Astrocyte of the cerebellum (primary cell): ENCODE measurements at regions of chr15 and their contacts with region 1.

Region 1: GRCh38 chr15:49235446-49236124 is 65.5 kb downstream of the GALK2 start:
- DNase-seq: peak; percentile 86
- H3K4me3 ChIP-seq: no peak overlapping the region
- CTCF ChIP-seq: peak; percentile 72

Region 2: DNA sequence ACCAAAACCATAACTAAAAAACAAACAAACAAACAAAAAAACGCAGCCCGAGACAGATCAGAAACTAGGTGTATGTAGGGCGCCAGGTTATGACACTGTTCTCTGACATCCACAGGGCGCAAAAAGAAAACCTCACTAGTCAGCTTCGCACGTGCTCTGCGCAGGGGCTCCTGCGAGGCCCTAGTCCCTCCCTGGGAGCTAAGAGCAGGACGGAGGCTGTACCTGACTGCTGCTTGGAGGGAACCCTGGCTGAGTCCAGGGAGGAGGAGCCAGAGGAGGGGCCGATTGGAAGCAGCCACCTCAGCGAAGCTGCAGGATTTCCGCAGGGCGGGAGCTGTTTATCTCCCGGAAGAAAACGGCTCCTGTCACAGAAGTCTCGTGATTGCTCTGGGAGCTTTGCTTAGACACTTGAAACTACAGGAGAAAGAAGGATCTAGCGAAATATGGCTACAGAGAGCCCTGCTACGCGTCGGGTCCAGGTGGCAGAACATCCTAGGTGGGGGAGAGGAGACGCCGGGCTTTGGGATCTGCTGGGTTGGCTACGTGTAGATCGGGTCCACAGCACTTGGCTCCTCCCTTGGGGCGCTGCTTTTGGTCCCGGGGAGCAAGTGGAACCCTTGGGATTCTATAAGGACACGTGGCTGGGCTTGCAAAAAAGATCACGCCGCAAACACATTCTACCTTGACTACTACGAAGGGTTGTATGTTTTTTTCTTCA is 65.5 kb before region 1 on chr15 and contains the start of gene GALK2:
- in situ Hi-C with region 1: no loop called
- DNase-seq: peak; percentile 36
- H3K4me3 ChIP-seq: peak within 1 kb of the TSS; percentile 85
- CTCF ChIP-seq: no peak

Region 3: GRCh38 chr15:49301562-49301961 is 66.0 kb after region 1 on chr15:
- in situ Hi-C with region 1: loop called (anchors 5 kb)
- DNase-seq: no peak
- H3K4me3 ChIP-seq: no peak overlapping the region
- CTCF ChIP-seq: no peak